Activated naive CD4-positive, alpha-beta T cell treated with anti-CD3 and anti-CD28 coated beads for 36 hours (primary cell): ENCODE measurements at regions of chr3 and their contacts with region 1.

Region 1: DNA sequence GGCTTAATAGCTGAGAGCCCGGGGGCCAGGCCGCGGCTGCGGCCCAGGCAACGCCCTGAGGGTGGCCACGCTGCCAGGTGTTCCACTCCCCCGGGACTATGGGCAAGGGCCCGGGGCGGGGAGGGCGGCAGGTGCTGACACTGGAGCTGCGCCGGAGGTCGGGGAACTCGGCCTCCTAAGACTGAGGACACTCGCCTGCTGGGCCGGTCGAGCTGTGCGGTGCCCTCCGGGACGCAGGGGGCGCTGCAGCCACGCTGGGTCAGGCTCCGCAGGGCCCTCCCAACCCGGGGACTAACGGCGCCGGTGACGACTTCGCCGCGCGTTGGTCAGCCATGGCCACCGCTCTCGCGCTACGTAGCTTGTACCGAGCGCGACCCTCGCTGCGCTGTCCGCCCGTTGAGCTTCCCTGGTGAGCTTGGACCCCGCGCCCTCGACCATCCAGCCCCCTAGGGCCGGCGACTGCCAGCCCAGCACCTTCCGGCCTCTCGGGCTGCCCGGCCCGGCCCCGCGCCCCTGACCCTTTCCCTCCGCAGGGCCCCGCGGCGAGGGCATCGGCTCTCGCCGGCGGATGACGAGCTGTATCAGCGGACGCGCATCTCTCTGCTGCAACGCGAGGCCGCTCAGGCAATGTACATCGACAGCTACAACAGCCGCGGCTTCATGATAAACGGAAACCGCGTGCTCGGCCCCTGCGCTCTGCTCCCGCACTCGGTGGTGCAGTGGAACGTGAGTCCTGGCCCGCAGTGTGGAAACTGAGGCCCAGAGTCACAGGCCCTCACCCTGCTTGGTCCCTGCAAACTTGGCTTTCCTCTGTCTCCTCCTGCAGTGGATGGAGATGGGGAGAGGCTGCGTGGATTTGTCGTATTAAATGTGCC is at the start of gene NDUFAF3:
- DNase-seq: peak; percentile 95
- H3K4me3 Mint-ChIP-seq: peak within 1 kb of the TSS; percentile 96
- H3K27ac Mint-ChIP-seq: peak within 1 kb of the TSS; percentile 97
- H3K4me1 Mint-ChIP-seq: peaks cover 60% of the 10 kb centered on the region
- H3K27me3 Mint-ChIP-seq: no peaks in the 10 kb centered on the region
- total RNA-seq, gene NDUFAF3: 113 to 115 TPM

Region 2: DNA sequence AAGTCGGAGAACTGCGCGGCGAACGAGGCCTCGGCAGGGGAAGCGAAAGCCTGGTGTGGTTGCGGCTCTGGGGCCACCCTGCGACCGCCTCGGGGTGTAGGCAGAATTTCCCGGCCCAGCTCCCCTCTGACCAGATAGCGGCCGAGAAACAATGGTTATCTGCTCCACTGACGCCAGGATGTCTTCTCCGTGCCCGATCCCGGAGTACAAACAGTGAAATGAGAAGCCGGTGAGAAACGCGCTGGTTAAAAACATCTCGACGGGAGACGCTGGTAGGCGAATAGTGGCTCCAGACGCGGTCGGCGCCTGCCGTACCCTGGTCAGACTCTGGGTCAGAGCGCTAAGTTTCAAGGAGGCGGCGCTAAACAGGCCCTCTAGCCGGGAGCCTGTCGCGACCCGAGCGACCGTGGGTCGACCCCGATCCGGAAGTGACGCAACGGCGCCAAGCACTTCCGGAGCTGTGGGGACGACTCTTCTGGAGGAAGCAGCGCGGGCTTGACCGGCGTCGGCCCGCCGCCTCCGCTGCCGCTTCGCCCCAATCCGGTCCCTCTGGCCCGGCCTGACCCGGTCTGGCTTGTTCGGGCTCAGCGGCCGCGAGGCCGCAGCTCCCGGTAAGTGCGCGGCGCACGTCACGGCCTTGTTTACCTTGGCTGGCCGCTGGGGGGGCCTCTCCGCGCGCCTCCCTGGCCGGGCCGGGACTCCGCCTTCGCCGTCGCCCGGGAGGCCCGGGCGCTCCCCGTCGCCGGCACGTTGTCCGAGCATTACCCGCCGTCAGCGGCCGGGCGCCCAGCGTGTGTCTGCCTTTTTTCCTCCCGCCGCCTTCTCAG is 103.4 kb before region 1 on chr3 and contains the start of gene ARIH2:
- CTCF ChIA-PET with region 1: no interaction called
- intact Hi-C with region 1: loop called (anchors 1 kb)
- DNase-seq: peak; percentile 89
- H3K4me3 Mint-ChIP-seq: peak within 1 kb of the TSS; percentile 98
- H3K27ac Mint-ChIP-seq: peak within 1 kb of the TSS; percentile 100
- H3K4me1 Mint-ChIP-seq: peaks cover 29% of the 10 kb centered on the region
- H3K27me3 Mint-ChIP-seq: no peaks in the 10 kb centered on the region
- total RNA-seq, gene ARIH2: 96.1 to 99.1 TPM

Region 3: GRCh38 chr3:49007068-49007770 is 14.8 kb before region 1 on chr3 and contains the start of gene WDR6:
- CTCF ChIA-PET with region 1: interaction called, 84 read pairs
- intact Hi-C with region 1: loop called (anchors 1 kb)
- DNase-seq: peak; percentile 99
- H3K4me3 Mint-ChIP-seq: peak within 1 kb of the TSS; percentile 99
- H3K27ac Mint-ChIP-seq: peak within 1 kb of the TSS; percentile 99
- H3K4me1 Mint-ChIP-seq: peaks cover 19% of the 10 kb centered on the region
- H3K27me3 Mint-ChIP-seq: no peaks in the 10 kb centered on the region
- total RNA-seq, gene WDR6: 119 to 120 TPM

Region 4: GRCh38 chr3:49165771-49166751 is 144.0 kb after region 1 on chr3 and contains the start of gene CCDC71:
- CTCF ChIA-PET with region 1: interaction called, 3 read pairs
- intact Hi-C with region 1: loop called (anchors 5 kb)
- DNase-seq: peak; percentile 85
- H3K4me3 Mint-ChIP-seq: peak within 1 kb of the TSS; percentile 87
- H3K27ac Mint-ChIP-seq: peak within 1 kb of the TSS; percentile 83
- H3K4me1 Mint-ChIP-seq: peaks cover 30% of the 10 kb centered on the region
- H3K27me3 Mint-ChIP-seq: no peaks in the 10 kb centered on the region
- total RNA-seq, gene CCDC71: 11.8 to 12.8 TPM

Region 5: DNA sequence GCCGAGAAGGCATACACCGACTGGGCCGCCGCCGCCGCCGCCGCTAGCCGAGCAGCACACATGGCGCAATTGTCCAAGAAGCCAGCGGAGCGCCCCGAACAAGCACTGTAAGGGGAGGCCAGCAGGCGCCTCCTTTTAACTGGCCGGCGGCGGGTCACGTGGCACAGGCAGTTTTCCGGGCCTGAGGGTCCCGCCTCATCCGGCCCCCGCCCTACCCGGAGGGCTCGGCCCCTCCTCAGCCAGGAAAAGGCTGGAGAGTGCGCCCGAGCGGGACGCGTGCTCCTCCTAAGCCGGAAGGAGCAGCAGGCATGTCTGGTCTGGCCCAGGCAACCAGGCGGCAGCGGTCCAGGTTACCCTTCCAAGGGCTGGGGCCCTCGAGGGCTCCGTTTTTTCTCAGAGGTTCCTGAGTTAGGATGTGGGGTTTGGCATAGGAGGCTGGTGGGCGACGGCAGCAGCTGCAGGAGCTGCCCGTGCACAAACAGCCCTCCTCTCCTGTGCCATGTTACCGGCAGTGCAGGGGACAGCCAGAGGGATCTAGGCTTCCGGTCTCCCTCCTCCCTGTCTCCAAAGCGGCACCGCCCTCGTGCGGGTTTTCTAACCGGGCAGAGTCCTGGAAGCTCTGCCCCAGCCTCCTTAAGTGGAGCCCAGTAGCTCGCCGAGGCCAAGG is 336.3 kb after region 1 on chr3 and contains the start of gene GPX1:
- CTCF ChIA-PET with region 1: no interaction called
- intact Hi-C with region 1: loop called (anchors 5 kb)
- DNase-seq: peak; percentile 93
- H3K4me3 Mint-ChIP-seq: peak within 1 kb of the TSS; percentile 92
- H3K27ac Mint-ChIP-seq: peak within 1 kb of the TSS; percentile 94
- H3K4me1 Mint-ChIP-seq: peaks cover 23% of the 10 kb centered on the region
- H3K27me3 Mint-ChIP-seq: no peaks in the 10 kb centered on the region
- total RNA-seq, gene GPX1: 198 to 202 TPM

Region 6: DNA sequence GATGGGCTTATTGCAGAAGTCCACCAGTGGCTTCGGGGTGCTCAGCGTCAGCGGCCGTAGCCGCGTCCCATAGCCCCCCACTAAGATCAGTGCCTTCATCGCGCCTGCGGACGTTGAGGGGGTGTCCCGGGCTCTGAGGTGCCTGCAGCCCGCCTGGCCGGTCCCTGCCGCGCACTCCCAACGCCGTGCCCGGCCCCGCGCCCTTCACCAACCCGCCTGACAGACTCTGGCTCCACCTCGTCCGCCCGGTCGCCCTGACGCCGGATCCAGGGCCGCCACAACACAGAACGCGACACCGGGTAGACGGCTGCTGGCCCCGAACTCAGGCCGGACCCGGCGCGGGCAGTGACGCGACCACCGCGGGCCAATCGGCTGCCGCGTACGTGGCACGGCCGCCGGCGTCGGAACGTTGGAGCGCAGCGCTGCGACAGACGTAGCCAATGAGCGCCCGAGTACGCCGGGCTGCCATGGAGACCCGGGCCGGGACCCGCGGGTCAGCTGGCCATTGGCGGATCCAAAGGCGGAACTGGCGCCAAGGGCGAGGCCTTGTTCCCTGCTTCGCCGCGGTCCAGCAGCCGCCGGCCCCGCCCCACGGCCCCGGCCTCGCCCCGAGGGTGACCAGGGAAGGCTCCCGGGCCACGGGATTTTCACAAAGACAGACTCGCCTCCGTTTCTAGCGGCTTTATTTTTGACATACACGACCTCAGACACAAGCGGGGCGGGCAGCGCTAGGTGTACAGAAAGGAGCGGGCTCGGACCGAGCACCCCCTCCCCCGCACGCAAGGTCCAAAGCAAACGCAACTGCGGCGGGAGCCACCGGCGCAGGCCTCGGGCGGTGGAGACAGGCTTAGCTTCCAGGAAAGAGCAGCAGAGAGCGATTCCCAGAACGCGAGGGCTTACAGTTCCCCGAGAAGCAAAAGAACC is 701.8 kb after region 1 on chr3 and contains the start of gene GMPPB:
- CTCF ChIA-PET with region 1: no interaction called
- intact Hi-C with region 1: loop called (anchors 10 kb)
- DNase-seq: peak; percentile 96
- H3K4me3 Mint-ChIP-seq: peak within 1 kb of the TSS; percentile 96
- H3K27ac Mint-ChIP-seq: peak within 1 kb of the TSS; percentile 95
- H3K4me1 Mint-ChIP-seq: peaks cover 33% of the 10 kb centered on the region
- H3K27me3 Mint-ChIP-seq: no peaks in the 10 kb centered on the region
- total RNA-seq, gene GMPPB: 25.6 to 27.4 TPM

Region 7: GRCh38 chr3:49786241-49786958 is 764.4 kb after region 1 on chr3 and contains the start of gene IP6K1:
- CTCF ChIA-PET with region 1: no interaction called
- intact Hi-C with region 1: loop called (anchors 5 kb)
- DNase-seq: peak; percentile 100
- H3K4me3 Mint-ChIP-seq: peak within 1 kb of the TSS; percentile 83
- H3K27ac Mint-ChIP-seq: peak within 1 kb of the TSS; percentile 86
- H3K4me1 Mint-ChIP-seq: peaks cover 30% of the 10 kb centered on the region
- H3K27me3 Mint-ChIP-seq: no peaks in the 10 kb centered on the region
- total RNA-seq, gene IP6K1: 18.3 to 20.3 TPM